PC-9 (cell line): ENCODE measurements at regions of chr1 and their contacts with region 1.

Region 1: GRCh38 chr1:153705485-153705884 is 22.4 kb upstream of the INTS3 start:
- DNase-seq: no peak
- H3K4me3 ChIP-seq: no peak overlapping the region
- H3K27ac ChIP-seq: no peak overlapping the region
- H3K4me1 ChIP-seq: peaks cover 29% of the 10 kb centered on the region
- H3K27me3 ChIP-seq: no peaks in the 10 kb centered on the region
- CTCF ChIP-seq: no peak

Region 2: DNA sequence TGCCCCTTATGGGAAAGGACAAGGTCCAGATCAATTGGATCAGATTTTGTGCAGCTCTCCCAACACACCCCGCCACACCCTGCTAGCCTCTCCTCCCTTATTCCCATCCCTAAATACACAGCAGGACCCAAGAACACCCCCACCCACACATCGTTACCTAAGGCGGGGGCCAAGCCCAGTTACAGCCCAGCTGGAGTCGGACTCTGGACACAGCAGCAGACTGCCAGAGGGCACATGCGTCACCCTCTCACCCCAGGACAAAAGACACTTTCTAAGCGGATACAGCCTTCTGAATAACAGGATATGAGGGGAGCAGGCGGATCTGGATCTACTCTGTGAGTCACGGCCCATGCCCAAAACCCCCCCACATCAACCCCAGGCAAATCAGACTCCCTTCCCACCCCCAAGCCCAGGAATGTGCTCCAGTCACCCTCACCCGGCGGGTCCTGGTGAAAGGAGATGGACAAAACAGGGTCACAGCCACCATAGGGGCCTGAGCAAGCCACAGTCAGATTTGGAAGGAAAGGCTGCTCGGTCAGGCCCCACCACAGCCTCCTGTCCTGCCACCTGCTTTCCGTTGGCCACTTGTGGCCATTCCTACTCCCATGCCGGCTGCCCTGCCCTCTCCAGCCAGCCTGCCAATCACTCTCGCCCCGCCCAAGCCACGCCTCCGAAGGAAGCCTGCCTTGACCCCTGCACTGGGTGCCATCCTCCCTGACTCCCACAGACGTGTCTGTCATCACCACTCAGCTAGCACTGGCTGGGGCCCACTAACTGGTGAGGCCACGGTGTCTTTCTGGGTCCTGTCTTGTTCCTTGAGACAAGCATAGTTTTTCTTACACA is 96.5 kb before region 1 on chr1:
- CTCF ChIA-PET with region 1: no interaction called
- POLR2A ChIA-PET with region 1: no interaction called
- intact Hi-C with region 1: no loop called
- DNase-seq: peak; percentile 94 to 98
- H3K4me3 ChIP-seq: peak overlapping the region; percentile 56
- H3K27ac ChIP-seq: peak overlapping the region; percentile 96
- H3K4me1 ChIP-seq: peaks cover 52% of the 10 kb centered on the region
- H3K27me3 ChIP-seq: no peaks in the 10 kb centered on the region
- CTCF ChIP-seq: no peak; the same call in 1 of the 2 replicates

Region 3: DNA sequence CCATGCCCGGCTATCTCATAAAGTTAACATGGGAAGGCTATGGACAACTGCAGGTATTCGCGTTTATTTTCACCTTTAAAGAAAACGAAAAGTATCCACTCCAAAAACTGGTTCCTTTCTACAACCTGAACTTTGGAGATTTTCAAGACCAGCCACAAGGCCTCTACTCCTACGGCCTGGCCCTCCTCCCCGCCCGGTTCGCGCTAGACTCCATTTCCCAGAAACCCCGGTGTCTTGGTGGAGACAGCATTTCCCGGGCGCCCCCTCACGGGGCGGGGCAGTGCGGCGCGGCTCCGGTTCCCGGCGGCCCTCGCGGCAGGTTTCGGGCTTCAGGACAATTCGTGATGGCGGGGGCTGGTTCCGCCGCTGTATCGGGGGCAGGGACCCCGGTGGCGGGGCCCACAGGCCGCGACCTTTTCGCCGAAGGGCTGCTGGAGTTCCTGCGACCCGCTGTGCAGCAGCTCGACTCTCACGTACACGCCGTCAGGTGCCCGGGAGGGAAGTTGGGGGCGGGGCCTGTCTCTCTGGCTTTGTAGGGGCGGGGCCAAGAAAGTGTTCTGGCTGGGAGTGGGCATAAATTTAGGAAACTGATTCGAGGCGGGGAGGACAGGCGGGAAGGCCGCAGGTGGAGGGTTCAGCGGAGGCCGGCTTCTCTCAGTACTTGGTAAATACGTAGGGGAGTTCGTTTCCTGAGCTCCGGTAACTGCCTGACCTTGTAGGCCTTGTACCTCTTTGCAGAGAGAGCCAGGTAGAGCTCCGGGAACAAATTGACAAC is 46.9 kb before region 1 on chr1 and contains the start of gene SNAPIN:
- CTCF ChIA-PET with region 1: no interaction called
- POLR2A ChIA-PET with region 1: interaction called, 18 read pairs
- intact Hi-C with region 1: no loop called
- DNase-seq: peak; percentile 77 to 91
- H3K4me3 ChIP-seq: peak within 1 kb of the TSS; percentile 72
- H3K27ac ChIP-seq: peak within 1 kb of the TSS; percentile 55
- H3K4me1 ChIP-seq: peaks cover 6% of the 10 kb centered on the region
- H3K27me3 ChIP-seq: no peaks in the 10 kb centered on the region
- CTCF ChIP-seq: peak; percentile 41; the same call in 1 of the 2 replicates
- total RNA-seq, gene SNAPIN: 25.4 and 29.5 TPM in 2 replicates

Region 4: DNA sequence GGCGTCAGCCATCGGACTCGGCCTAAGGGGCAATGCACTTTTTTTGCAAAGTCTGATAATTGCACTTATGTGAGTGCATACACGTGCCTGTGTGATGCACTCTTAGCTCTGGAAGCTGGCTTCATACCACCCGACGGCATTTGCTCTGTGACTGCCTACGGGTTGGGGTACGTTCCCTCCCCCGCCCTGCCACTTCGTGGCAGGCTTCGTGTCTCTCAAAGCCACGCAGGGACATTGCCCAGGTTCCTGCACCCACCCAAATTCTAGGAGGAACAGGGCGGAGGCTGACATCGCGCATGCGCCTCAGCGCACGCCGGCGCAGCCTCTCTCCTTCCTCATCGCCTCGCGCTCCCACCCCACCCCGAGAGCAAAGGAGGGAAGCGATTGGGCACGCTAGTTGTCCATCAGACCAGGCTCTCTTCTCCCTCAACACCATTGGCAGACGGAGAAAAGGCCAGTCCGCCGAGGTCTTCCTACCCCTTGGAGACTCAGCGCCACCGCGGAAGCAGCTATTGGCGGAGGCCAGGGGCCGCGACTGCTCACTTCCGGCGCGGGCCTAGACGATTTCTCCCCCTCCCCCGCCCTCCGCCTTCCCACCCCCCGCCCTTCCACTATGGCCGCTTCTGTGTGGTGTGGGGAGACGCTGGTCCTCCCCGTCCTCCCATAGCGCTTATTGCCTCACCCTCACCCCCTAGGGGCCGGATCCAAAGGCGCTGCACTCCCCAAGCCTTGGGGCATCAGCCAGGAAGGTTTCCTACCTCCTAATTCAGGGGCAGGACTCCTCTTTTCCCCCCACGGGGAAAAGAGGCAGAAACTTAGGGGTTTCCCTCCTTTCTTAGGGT is 22.2 kb after region 1 on chr1 and contains the start of gene INTS3:
- CTCF ChIA-PET with region 1: interaction called, 4 read pairs
- POLR2A ChIA-PET with region 1: interaction called, 19 read pairs
- intact Hi-C with region 1: no loop called
- DNase-seq: peak; percentile 99
- H3K4me3 ChIP-seq: peak within 1 kb of the TSS; percentile 94
- H3K27ac ChIP-seq: peak within 1 kb of the TSS; percentile 84
- H3K4me1 ChIP-seq: peaks cover 21% of the 10 kb centered on the region
- H3K27me3 ChIP-seq: no peaks in the 10 kb centered on the region
- CTCF ChIP-seq: peak; percentile 24; the same call in 1 of the 2 replicates
- total RNA-seq, gene INTS3: 62.5 and 91.7 TPM in 2 replicates

Region 5: GRCh38 chr1:154206196-154206595 is 500.7 kb after region 1 on chr1 and contains the start of gene CFAP141:
- CTCF ChIA-PET with region 1: interaction called, 13 read pairs
- POLR2A ChIA-PET with region 1: no interaction called
- intact Hi-C with region 1: no loop called
- DNase-seq: peak in 1 of 2 experiments; percentile 57
- H3K4me3 ChIP-seq: no peak within 1 kb of the TSS
- H3K27ac ChIP-seq: no peak within 1 kb of the TSS
- H3K4me1 ChIP-seq: no peaks in the 10 kb centered on the region
- H3K27me3 ChIP-seq: no peaks in the 10 kb centered on the region
- CTCF ChIP-seq: no peak
- total RNA-seq, gene CFAP141: not detected in 2 replicates